ENCODE measurements at regions of chr4 and their contacts with region 1.

Region 1: GRCh38 chr4:53015681-53016080 is 153.6 kb downstream of the RASL11B start:
- DNase-seq: peak; percentile 49
- ATAC-seq: no peak
- H3K4me3 Mint-ChIP-seq: no peak overlapping the region
- H3K27ac Mint-ChIP-seq: no peak overlapping the region
- H3K4me1 Mint-ChIP-seq: peaks cover 38% of the 10 kb centered on the region
- H3K27me3 Mint-ChIP-seq: no peaks in the 10 kb centered on the region

Region 2: GRCh38 chr4:53196882-53197771 is 181.4 kb after region 1 on chr4:
- CTCF ChIA-PET with region 1: interaction called, 3 read pairs
- POLR2A ChIA-PET with region 1: no interaction called
- intact Hi-C with region 1: loop called (anchors 2 to 10 kb)
- DNase-seq: no peak
- ATAC-seq: peak; percentile 36
- H3K4me3 Mint-ChIP-seq: no peak overlapping the region
- H3K27ac Mint-ChIP-seq: no peak overlapping the region
- H3K4me1 Mint-ChIP-seq: no peaks in the 10 kb centered on the region
- H3K27me3 Mint-ChIP-seq: no peaks in the 10 kb centered on the region

Region 3: GRCh38 chr4:53365486-53366300 is 350.0 kb after region 1 on chr4 and contains the start of gene SCFD2:
- CTCF ChIA-PET with region 1: no interaction called
- POLR2A ChIA-PET with region 1: no interaction called
- intact Hi-C with region 1: loop called (anchors 5 kb)
- DNase-seq: peak; percentile 98
- ATAC-seq: peak; percentile 98
- H3K4me3 Mint-ChIP-seq: peak within 1 kb of the TSS; percentile 95
- H3K27ac Mint-ChIP-seq: peak within 1 kb of the TSS; percentile 95
- H3K4me1 Mint-ChIP-seq: peaks cover 47% of the 10 kb centered on the region
- H3K27me3 Mint-ChIP-seq: peaks cover 5% of the 10 kb centered on the region
- total RNA-seq, gene SCFD2: 21.6 to 22.5 TPM

Region 4: GRCh38 chr4:53804719-53805118 is 789.0 kb after region 1 on chr4:
- CTCF ChIA-PET with region 1: no interaction called
- POLR2A ChIA-PET with region 1: no interaction called
- intact Hi-C with region 1: loop called in 1 of 2 experiments (anchors 10 kb)
- DNase-seq: peak; percentile 58
- ATAC-seq: no peak
- H3K4me3 Mint-ChIP-seq: no peak overlapping the region
- H3K27ac Mint-ChIP-seq: no peak overlapping the region
- H3K4me1 Mint-ChIP-seq: no peaks in the 10 kb centered on the region
- H3K27me3 Mint-ChIP-seq: peaks cover 2% of the 10 kb centered on the region

Measured in activated CD4-positive, alpha-beta T cell treated with anti-CD3 and anti-CD28 coated beads for 36 hours (primary cell).